ENCODE measurements at regions of chr9 and their contacts with region 1.

Region 1: GRCh38 chr9:106587042-106587441 is 275.9 kb upstream of the ZNF462 start:
- DNase-seq: no peak
- ATAC-seq: no peak
- H3K4me3 ChIP-seq: no peak overlapping the region
- H3K27ac ChIP-seq: no peak overlapping the region
- H3K4me1 ChIP-seq: no peaks in the 10 kb centered on the region
- H3K27me3 ChIP-seq: no peaks in the 10 kb centered on the region
- CTCF ChIP-seq: no peak
- POLR2A ChIP-seq: no peak

Region 2: DNA sequence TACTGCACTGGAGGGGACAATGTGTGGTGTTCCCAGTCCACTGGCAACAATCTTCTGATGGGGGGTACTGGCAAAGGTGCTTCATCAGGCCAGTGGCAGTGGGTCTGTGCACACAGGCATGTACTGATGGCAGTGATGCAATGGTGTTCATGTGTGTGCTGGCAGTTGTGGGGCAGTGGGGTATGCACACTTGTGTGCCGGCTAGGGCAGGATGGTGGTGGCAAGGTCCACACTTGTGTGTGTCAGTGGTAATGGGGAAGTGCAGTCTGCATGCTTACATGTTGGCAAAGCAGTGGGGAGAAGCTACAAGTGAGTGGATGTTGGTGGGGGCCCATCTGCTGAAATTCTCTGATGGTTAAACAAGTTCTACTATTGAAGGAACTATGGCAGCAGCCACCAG is 228.7 kb before region 1 on chr9:
- intact Hi-C with region 1: no loop called
- DNase-seq: peak in 1 of 5 donors; percentile 37
- ATAC-seq: no peak
- H3K4me3 ChIP-seq: no peak overlapping the region
- H3K27ac ChIP-seq: no peak overlapping the region
- H3K4me1 ChIP-seq: no peaks in the 10 kb centered on the region
- H3K27me3 ChIP-seq: no peaks in the 10 kb centered on the region
- CTCF ChIP-seq: no peak
- POLR2A ChIP-seq: no peak

Region 3: GRCh38 chr9:106648799-106649198 is 61.8 kb after region 1 on chr9:
- intact Hi-C with region 1: loop called in 1 of 10 experiments (anchors 2 kb)
- DNase-seq: no peak
- ATAC-seq: no peak
- H3K4me3 ChIP-seq: no peak overlapping the region
- H3K27ac ChIP-seq: no peak overlapping the region
- H3K4me1 ChIP-seq: no peaks in the 10 kb centered on the region
- H3K27me3 ChIP-seq: no peaks in the 10 kb centered on the region
- CTCF ChIP-seq: peak in 8 of 12 donors; percentile 6 to 50 (median 34)
- POLR2A ChIP-seq: no peak

Region 4: DNA sequence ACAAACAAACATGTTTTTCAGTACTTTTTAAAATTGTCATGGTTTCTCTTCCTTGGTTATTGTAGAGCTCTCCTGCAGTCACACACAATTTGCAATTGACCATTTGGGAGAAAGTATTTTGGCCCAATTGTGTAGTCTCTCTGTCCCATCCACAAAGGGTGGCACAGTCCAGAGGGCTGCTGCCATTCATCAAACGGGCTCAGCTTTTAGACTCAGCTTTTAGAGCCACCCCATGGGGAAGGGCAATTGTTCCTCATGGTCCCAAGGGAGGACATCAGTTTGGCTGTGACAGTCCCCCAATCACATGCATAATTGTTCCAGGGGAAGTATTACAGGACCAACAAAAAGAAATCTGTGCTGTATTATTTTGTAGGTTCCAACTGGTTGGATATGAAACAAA is 483.5 kb after region 1 on chr9:
- intact Hi-C with region 1: no loop called
- DNase-seq: no peak
- ATAC-seq: no peak
- H3K4me3 ChIP-seq: no peak overlapping the region
- H3K27ac ChIP-seq: no peak overlapping the region
- H3K4me1 ChIP-seq: no peaks in the 10 kb centered on the region
- H3K27me3 ChIP-seq: no peaks in the 10 kb centered on the region
- CTCF ChIP-seq: no peak
- POLR2A ChIP-seq: no peak